HEK293T (cell line): ENCODE measurements at regions of chr14 and their contacts with region 1.

Region 1: GRCh38 chr14:34650421-34651216 is 20.7 kb upstream of the SNX6 start:
- DNase-seq: no peak

Region 2: GRCh38 chr14:34310724-34311123 is 339.9 kb before region 1 on chr14:
- CTCF ChIA-PET with region 1: no interaction called
- POLR2A ChIA-PET with region 1: no interaction called
- DNase-seq: no peak

Region 3: GRCh38 chr14:34733235-34733634 is 82.6 kb after region 1 on chr14:
- CTCF ChIA-PET with region 1: interaction called, 10 read pairs
- POLR2A ChIA-PET with region 1: no interaction called
- DNase-seq: no peak